Thyroid gland (tissue), 4 donors: ENCODE measurements at regions of chr16 and their contacts with region 1.

Region 1: GRCh38 chr16:4330277-4330874 is 14.5 kb downstream of the GLIS2 start:
- DNase-seq: peak; percentile 80 to 85
- H3K4me3 ChIP-seq: no peak overlapping the region
- H3K27ac ChIP-seq: no peak overlapping the region
- H3K4me1 ChIP-seq: peaks cover 22 to 48% of the 10 kb centered on the region in 2 donors
- H3K27me3 ChIP-seq: no peaks in the 10 kb centered on the region
- CTCF ChIP-seq: peak; percentile 88 to 97 (median 91)
- POLR2A ChIP-seq: no peak

Region 2: DNA sequence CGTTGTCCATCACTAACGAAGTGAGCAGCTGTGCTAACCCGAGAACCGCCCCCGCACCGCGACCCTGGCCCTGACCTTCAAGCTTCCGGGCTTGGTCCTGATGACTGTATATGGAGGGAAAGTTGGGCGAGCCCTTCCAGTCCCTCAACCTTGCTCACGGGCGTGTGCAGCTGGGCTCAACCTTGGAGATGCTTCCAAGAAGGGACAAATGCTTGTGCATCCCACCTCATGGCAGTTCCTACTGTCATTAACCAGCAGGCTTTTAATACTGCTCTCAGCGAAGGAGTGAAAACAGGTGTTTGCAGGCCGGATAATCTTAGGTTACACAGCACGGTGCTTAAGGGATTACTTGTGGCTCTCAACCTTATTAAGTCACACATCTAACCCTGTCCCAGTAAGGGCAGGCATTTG is 122.0 kb before region 1 on chr16:
- intact Hi-C with region 1: loop called (anchors 5 kb)
- DNase-seq: no peak
- H3K4me3 ChIP-seq: no peak overlapping the region
- H3K27ac ChIP-seq: peak overlapping the region in 1 of 3 donors; percentile 64
- H3K4me1 ChIP-seq: peaks cover 14 to 49% of the 10 kb centered on the region in 2 donors
- H3K27me3 ChIP-seq: no peaks in the 10 kb centered on the region
- CTCF ChIP-seq: no peak
- POLR2A ChIP-seq: no peak

Region 3: DNA sequence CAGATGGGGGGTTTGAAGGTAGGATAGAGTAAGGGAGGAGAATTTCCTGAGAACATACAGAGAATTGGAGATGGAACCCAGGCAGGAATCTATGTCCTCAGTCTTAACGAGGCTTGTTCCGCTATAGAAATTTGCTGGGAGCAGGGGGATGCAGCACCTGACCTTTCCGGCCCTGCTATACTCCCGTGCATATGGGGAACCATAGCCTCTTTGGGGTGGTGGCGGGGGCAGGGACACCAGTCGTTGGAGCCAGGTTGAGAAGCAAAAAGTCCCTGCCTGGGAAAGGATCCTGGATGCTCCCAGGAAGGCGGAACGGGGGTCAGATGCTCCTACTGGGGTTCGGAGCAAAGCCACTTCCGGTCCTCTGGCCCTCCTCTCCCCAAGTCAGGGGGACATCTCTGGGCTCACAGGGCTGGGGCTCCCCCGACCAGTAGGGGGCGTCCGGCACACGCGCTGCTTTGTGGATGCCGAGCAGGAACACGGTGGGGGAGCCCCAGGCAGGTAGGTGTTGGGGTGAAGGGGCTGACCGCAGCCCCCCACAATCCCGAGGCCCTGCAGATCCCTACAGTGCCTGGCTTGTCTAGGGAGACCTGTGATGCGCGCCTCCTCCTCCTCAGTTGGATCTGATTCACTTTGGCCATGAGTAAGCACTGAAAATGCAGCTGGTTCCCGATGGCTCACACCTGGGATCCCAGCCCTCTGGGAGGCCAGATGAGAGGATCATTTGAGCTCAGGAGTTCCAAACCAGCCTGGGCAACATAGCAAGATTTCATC is 42.0 kb before region 1 on chr16:
- intact Hi-C with region 1: loop called (anchors 2 kb)
- DNase-seq: peak; percentile 75 to 76
- H3K4me3 ChIP-seq: no peak overlapping the region
- H3K27ac ChIP-seq: no peak overlapping the region
- H3K4me1 ChIP-seq: peaks cover 5 to 19% of the 10 kb centered on the region in 2 donors
- H3K27me3 ChIP-seq: no peaks in the 10 kb centered on the region
- CTCF ChIP-seq: peak; percentile 90 to 96 (median 92)
- POLR2A ChIP-seq: no peak